ENCODE measurements at regions of chr14 and their contacts with region 1.

Region 1: GRCh38 chr14:58663494-58664415 is 26.0 kb downstream of the DACT1 start:
- DNase-seq: no peak
- ATAC-seq: peak; percentile 31 to 45

Region 2: GRCh38 chr14:58513272-58513671 is 150.5 kb before region 1 on chr14:
- intact Hi-C with region 1: no loop called
- DNase-seq: no peak
- ATAC-seq: no peak

Region 3: DNA sequence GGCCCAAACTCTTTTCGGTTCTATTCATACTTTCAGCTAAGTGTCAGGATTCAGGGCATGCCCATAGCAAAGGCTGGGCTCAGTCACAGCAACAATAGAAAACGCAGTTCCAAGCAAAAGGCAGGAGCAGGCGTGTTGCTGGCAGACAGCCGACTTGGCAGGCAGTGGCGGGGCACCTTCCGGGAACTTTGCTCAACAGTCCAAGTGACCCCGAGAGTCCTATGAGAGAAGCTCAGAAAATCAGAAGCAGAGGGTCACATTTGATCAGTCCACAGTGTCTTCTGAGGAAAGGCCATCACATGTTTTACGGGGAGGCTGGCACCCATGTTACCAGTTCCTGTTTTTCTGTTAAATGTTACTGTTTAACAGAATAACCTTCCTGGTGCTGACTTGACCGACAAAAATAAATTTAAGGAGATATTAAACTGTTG is 89.0 kb after region 1 on chr14:
- intact Hi-C with region 1: loop called in 1 of 2 experiments (anchors 10 kb)
- DNase-seq: peak; percentile 86
- ATAC-seq: peak; percentile 76 to 77

Region 4: DNA sequence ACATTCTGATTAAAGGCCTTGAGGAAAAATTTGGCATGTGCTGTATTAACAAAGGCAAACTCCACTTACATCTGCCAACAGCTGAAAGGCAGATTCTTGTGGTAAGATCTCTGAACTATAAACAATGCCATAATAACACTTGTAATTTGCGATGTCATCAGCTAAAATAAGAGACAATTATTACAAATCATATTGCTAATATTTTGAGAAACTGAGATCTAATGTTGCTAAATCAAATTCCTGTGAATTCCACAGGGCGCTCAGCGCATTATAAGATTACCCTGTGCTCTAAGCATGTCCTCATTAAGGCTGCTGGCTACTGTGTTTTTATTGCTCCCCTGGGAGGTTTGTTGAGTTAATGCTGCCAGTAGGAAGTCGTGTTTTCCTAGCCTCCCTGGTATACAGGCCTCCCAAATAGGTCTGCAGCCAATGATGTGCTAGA is 218.8 kb after region 1 on chr14:
- intact Hi-C with region 1: no loop called
- DNase-seq: no peak
- ATAC-seq: peak; percentile 62 to 72